Prostate gland (tissue), 2 donors: ENCODE measurements at regions of chr9 and their contacts with region 1.

Region 1: DNA sequence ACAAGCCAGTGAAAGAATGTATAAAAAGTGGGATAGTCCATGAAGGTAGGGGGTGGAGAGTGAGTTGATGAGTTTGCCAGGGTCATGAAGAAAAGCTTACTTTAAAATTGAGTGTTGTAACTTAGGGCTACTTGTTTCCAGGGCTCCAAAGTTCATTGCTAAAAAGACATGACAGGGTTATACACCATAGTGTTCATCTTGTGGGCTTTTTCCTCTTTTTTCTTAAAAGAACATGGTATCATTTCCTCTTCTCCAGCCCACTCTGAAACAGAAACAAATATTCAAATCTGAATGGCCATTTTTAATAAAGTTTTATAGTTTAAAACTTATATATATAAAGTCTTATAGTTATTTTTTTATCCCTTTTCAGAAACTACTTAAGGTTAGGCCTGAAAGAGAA is 115.7 kb upstream of the SMC2 start:
- DNase-seq: no peak
- H3K4me3 ChIP-seq: no peak overlapping the region
- H3K27ac ChIP-seq: no peak overlapping the region
- H3K4me1 ChIP-seq: no peaks in the 10 kb centered on the region
- H3K27me3 ChIP-seq: no peaks in the 10 kb centered on the region
- CTCF ChIP-seq: no peak
- POLR2A ChIP-seq: no peak

Region 2: GRCh38 chr9:103899866-103900265 is 78.5 kb before region 1 on chr9:
- intact Hi-C with region 1: loop called (anchors 10 kb)
- DNase-seq: no peak
- H3K4me3 ChIP-seq: no peak overlapping the region
- H3K27ac ChIP-seq: no peak overlapping the region
- H3K4me1 ChIP-seq: no peaks in the 10 kb centered on the region
- H3K27me3 ChIP-seq: no peaks in the 10 kb centered on the region
- CTCF ChIP-seq: no peak
- POLR2A ChIP-seq: no peak